Thyroid gland (tissue), 4 donors: ENCODE measurements at regions of chr9 and their contacts with region 1.

Region 1: DNA sequence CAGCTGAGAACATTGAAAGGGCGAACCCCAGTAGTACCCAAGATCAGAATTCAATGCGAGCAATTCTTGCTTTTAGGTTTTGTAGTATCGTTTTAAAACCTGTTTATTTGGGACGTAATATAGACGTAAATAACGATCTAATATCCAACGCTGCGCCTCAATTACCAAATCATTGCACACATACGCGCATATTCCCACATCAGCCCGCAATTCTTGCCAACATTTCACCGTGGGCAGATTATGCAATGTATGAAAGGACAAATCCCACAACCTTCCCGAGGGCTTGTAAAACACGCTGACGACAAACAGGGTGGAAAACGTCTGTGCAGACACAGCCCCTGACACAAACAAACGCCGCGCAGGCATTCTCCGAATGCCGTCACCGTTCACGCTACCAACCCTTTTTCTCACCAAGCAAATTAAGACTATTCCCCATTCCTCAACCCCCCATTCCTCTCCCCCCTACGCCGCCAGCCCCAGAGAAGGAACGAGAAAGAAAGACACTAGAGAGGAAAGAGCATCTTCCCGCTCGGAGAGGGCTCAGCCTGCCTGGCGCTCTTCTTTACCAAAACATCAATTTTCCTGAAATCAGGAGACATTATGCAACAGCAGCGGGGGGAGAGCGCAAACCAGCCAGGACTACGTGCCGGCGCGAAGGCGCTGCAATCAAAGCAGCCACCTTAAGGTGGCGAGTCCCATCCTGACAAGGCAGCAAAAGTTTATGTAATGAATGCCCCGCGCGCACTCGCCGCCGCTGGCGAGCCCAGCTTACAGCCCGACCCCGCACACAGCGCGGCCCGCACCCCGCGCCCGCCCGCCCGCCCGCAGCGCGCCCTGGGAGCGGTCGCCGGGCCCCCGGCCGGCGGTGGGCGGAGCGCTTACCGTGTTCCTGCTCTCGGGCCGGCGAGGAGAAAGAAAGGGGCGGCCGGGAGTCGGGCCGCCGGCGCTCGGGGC is 597 bp downstream of the NFIL3 start:
- DNase-seq: peak; percentile 68 to 69
- H3K4me3 ChIP-seq: peak overlapping the region; percentile 55 to 89 (median 87)
- H3K27ac ChIP-seq: peak overlapping the region; percentile 92 to 94 (median 93)
- H3K4me1 ChIP-seq: peaks cover 20 to 36% of the 10 kb centered on the region in 2 donors
- H3K27me3 ChIP-seq: no peaks in the 10 kb centered on the region
- CTCF ChIP-seq: peak in 1 of 6 experiments; percentile 40
- POLR2A ChIP-seq: peak in 1 of 2 donors; percentile 42

Region 2: GRCh38 chr9:90914868-90915483 is 508.1 kb before region 1 on chr9:
- intact Hi-C with region 1: loop called (anchors 5 kb)
- DNase-seq: peak; percentile 86 to 89
- H3K4me3 ChIP-seq: no peak overlapping the region
- H3K27ac ChIP-seq: peak overlapping the region; percentile 63 to 77 (median 71)
- H3K4me1 ChIP-seq: peaks cover 14 to 20% of the 10 kb centered on the region in 2 donors
- H3K27me3 ChIP-seq: no peaks in the 10 kb centered on the region
- CTCF ChIP-seq: peak; percentile 69 to 98 (median 90)
- POLR2A ChIP-seq: no peak

Region 3: GRCh38 chr9:91036826-91037510 is 386.1 kb before region 1 on chr9:
- intact Hi-C with region 1: loop called (anchors 5 kb)
- DNase-seq: peak; percentile 74 to 79
- H3K4me3 ChIP-seq: no peak overlapping the region
- H3K27ac ChIP-seq: no peak overlapping the region
- H3K4me1 ChIP-seq: peaks cover 0 to 22% of the 10 kb centered on the region in 2 donors
- H3K27me3 ChIP-seq: no peaks in the 10 kb centered on the region
- CTCF ChIP-seq: peak in 4 of 6 experiments; percentile 57 to 63 (median 60)
- POLR2A ChIP-seq: no peak

Region 4: GRCh38 chr9:91193658-91194391 is 229.2 kb before region 1 on chr9:
- intact Hi-C with region 1: loop called (anchors 10 kb)
- DNase-seq: peak; percentile 75 to 80
- H3K4me3 ChIP-seq: peak overlapping the region in 2 of 3 donors; percentile 9 to 26
- H3K27ac ChIP-seq: peak overlapping the region; percentile 96 to 99 (median 98)
- H3K4me1 ChIP-seq: peaks cover 27 to 48% of the 10 kb centered on the region in 2 donors
- H3K27me3 ChIP-seq: no peaks in the 10 kb centered on the region
- CTCF ChIP-seq: no peak
- POLR2A ChIP-seq: peak in 1 of 2 donors; percentile 26

Region 5: DNA sequence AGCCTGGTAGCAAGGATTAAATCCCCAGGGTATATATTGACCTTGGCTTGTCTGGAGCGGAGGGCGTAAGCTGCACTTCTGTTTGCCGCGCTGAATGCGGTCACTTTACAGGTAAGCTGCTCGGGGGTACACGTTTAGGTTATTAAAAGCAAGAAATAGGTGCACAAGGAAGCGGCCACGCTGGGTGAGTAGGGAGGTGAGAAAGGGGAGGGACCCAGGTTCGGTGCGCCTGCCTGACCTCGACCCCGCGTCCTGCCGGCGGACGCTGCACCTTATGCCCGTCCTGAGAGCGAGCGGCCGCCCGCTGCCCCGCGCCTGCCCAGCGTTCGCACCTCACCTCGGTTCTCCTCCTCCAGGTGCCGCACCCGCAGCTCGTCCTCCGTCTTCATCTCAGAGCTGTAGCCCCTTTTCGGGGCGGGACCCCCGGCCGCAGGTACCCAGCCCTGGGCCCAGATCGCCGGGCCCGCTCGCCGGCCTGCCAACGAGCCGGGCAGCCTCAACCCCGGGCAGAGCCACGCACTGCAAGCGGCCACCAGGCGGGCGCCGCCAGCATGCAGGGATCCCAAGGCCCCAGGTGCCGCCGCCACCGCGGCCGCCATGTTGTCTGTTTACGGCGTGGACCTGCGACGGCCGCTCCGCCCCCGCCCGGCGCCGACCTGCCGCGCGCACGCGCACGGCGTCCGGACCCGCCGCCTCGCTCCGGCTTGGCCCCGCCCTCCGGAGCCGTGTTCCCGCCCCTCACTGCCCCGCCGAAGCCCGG is 61.6 kb before region 1 on chr9 and contains the start of gene AUH:
- intact Hi-C with region 1: loop called (anchors 10 kb)
- DNase-seq: peak; percentile 84 to 86
- H3K4me3 ChIP-seq: peak within 1 kb of the TSS; percentile 90 to 97 (median 95)
- H3K27ac ChIP-seq: peak within 1 kb of the TSS; percentile 85 to 98 (median 95)
- H3K4me1 ChIP-seq: peaks cover 27 to 31% of the 10 kb centered on the region in 2 donors
- H3K27me3 ChIP-seq: no peaks in the 10 kb centered on the region
- CTCF ChIP-seq: peak in 2 of 6 experiments; percentile 14 to 21
- POLR2A ChIP-seq: peak; percentile 63 to 91
- total RNA-seq, gene AUH: 57.1 to 83.5 (median 65.2) TPM

Region 6: DNA sequence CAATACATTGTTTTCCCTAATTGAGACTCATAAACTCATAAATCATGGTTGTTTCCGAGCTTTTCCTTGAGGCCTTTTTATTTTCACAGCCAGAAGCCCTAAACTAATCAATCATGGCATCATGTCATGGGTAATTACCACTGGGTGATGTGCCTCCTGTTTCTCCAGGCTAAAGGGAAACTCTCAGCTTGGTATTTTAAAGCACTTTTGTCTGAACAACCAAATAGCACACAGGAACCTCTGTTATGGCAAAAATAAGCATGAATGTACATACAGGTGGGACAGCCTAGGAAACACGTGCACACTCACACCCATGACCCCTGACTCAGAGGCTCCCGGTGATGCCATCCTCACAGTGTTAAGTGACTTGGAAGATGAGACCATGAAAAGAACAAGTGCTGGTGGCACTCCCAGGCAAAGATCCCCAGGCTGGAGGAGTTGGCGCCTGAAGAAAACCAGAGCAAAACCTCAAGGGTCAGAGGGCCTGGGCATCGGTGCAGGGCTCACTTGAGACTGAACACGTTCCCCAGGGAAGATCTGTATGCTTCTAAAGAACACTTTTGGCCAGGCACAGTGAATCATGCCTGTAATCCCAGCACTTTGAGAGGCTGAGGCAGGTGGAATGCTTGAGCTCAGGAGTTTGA is 372.7 kb after region 1 on chr9:
- intact Hi-C with region 1: no loop called
- DNase-seq: peak; percentile 33 to 46
- H3K4me3 ChIP-seq: no peak overlapping the region
- H3K27ac ChIP-seq: peak overlapping the region in 2 of 3 donors; percentile 3 to 24
- H3K4me1 ChIP-seq: peaks cover 24 to 31% of the 10 kb centered on the region in 2 donors
- H3K27me3 ChIP-seq: no peaks in the 10 kb centered on the region
- CTCF ChIP-seq: no peak
- POLR2A ChIP-seq: no peak